Activated CD4-positive, alpha-beta memory T cell treated with anti-CD3 and anti-CD28 coated beads, Interleukin-2, amount 10 ng/mL, durations not matched to agents 7 days and 5 days (primary cell): ENCODE measurements at regions of chr2 and their contacts with region 1.

Region 1: DNA sequence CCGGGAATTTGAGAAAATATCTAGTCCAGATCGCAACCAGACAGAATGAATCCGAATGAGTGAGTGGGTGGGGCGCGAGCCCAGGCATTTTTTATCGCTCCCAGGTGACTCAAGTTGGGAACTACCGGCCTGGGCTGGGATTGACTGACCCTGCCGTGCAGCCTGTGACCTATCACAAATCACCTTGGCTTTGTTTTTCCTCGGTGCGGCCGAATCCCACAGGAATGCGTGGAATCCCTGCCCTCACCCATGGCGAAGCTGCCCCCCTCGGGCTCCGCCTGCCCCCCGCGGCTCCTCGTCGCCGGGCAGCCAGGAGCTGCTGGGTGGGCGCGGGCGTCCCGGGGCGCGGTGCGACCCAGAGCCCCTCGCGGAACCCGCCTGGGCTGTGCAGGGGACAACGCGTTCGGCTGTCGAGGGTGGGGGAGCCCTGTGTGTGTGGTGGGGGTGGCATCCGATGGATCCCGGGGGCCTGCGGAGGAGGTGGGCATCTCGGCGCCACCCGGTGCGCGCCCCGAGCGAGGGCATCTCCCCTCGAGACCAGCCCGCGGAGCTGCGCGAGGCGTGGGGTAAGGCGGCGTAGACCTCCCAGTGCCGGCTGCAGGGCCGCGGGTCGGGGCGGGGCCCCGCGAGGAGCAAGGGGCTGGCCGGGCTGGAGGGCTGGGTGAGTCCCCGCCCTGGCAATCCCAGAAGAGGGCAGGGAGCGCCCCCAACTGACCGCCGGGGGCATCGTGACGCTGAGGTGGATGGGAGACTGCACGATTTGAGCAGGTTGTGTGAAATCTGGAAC is 16.5 kb downstream of the B3GNT7 start:
- DNase-seq: peak; percentile 62
- H3K4me3 Mint-ChIP-seq: no peak overlapping the region
- H3K27ac Mint-ChIP-seq: no peak overlapping the region
- H3K4me1 Mint-ChIP-seq: peaks cover under 1% of the 10 kb centered on the region
- H3K27me3 Mint-ChIP-seq: peaks cover 49% of the 10 kb centered on the region

Region 2: DNA sequence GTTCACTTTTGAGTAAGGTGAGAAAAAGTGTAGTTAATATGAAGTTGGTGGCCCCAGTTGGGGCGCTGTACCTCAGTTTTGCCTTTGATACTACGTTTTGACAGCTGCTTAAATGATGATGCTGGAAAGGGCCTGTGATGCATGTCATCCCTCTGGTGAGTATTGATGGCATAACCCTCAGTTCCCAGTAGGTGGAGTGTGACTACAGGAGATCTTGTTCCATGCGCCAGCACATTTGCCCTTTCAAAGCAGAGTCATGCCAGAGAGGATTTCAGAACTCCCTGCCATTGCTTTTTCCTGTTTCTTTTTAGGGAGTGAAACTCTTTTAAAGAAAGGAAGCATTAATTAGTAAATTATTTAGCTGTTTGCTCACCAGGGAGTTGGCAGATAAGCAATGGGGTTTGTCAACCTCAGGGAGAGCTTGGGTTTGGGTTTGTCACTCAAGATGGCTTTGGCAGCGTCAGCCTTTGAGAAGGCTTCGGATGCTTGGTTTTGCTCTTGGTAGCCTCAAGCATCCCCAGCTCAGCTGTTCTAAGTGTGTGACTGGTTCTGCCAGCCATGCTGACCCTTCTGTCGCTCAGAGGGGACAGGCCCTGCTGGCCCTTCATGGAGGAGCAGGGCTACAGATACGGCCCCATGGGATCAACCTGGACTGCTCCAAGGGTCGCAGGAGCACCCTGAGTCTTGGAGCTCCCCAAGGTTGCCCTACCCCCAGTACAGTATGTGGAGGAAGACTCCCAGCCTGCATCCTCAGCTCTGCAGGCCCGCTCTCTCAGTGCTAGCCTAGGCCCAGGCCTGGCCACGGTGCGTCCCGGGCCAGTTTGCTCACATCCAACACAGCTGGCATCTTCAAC is 184.5 kb before region 1 on chr2:
- CTCF ChIA-PET with region 1: interaction called, 15 read pairs
- POLR2A ChIA-PET with region 1: no interaction called
- DNase-seq: peak; percentile 54
- H3K4me3 Mint-ChIP-seq: no peak overlapping the region
- H3K27ac Mint-ChIP-seq: no peak overlapping the region
- H3K4me1 Mint-ChIP-seq: no peaks in the 10 kb centered on the region
- H3K27me3 Mint-ChIP-seq: no peaks in the 10 kb centered on the region

Region 3: DNA sequence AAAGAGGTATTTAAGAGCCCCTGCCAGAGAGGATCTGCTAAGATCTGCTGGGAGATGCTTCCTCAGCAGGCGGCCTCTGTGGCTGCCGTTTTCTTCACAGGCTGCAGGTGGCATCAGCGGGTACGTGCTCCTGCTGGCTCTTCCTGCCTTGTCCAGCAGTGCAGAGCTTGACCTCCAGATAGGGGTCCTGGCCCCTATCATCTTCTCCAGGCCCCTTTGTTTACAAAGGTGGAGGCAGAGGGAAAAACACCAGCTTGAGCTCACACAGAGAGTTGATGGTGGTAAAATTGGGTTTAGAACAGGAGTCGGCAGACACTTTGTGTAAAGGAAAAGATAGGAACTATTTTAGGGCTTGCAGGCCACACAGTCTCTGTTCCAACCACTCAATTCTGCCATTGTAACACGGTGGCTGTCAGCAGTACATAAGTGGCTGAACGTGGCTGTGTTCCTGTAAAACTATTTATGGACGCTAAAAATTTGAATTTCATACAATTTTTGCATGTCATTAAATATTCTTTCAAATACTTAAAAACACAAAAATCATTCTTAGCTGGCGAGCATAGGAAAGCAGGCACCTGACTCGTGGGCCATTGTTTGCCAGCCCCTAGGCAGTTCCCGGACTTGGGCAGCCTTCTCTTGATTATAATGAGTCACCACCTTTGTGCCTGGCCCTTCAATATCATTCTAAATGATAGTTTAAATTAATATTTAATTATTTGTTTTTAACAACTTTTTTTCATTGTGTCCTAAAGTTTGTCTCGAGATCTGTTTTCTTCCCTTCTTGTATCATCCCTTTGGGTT is 114.7 kb before region 1 on chr2:
- CTCF ChIA-PET with region 1: interaction called, 22 read pairs
- POLR2A ChIA-PET with region 1: no interaction called
- DNase-seq: peak; percentile 36
- H3K4me3 Mint-ChIP-seq: no peak overlapping the region
- H3K27ac Mint-ChIP-seq: no peak overlapping the region
- H3K4me1 Mint-ChIP-seq: peaks cover 4% of the 10 kb centered on the region
- H3K27me3 Mint-ChIP-seq: peaks cover 13% of the 10 kb centered on the region

Region 4: GRCh38 chr2:231452799-231453508 is 40.9 kb after region 1 on chr2:
- CTCF ChIA-PET with region 1: interaction called, 17 read pairs
- POLR2A ChIA-PET with region 1: no interaction called
- DNase-seq: no peak
- H3K4me3 Mint-ChIP-seq: no peak overlapping the region
- H3K27ac Mint-ChIP-seq: no peak overlapping the region
- H3K4me1 Mint-ChIP-seq: peaks cover 19% of the 10 kb centered on the region
- H3K27me3 Mint-ChIP-seq: no peaks in the 10 kb centered on the region

Region 5: GRCh38 chr2:231706731-231707624 is 295.0 kb after region 1 on chr2:
- CTCF ChIA-PET with region 1: no interaction called
- POLR2A ChIA-PET with region 1: no interaction called
- DNase-seq: peak; percentile 97
- H3K4me3 Mint-ChIP-seq: peak overlapping the region; percentile 91
- H3K27ac Mint-ChIP-seq: peak overlapping the region; percentile 100
- H3K4me1 Mint-ChIP-seq: peaks cover 20% of the 10 kb centered on the region
- H3K27me3 Mint-ChIP-seq: no peaks in the 10 kb centered on the region